ENCODE measurements at regions of chr17 and their contacts with region 1.

Region 1: DNA sequence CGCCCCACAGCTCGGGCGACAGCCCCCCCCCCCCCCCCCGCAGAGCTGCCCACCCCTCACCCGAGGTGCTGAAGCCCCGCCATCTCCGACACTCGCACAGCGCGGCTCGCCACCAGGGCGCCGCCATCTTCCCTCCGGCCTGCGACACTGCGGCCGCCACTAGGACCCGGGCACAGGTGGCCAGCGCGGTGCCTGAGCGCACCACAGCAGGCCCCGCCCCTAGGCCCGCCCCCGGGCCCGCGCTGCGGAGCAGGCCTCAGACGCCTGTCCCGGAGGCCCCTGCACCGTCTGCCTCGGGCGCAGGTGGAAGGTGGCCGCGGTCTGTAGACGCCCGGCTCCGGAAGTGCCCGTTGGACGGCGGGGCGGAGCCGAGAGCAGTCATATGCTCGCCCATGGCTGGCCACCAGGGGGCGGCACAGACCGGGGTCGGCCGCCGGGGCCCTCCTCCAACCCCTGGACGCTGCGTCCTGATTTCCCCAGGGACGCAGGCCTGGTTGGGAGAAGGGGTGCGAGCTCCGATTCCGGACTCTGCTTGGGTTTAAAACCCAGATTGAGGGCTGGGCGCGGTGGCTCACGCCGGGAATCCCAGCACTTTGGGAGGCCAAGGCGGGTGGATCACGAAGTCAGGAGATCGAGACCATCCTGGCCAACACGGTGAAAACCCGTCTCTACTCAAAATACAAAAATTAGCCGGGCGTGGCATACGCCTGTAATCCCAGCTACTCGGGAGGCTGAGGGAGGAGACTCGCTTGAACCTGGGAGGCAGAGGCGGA is at the start of gene MRPL38:
- DNase-seq: peak; percentile 95
- ATAC-seq: peak; percentile 98
- H3K4me3 ChIP-seq: peak within 1 kb of the TSS; percentile 20 to 77
- H3K27ac ChIP-seq: peak within 1 kb of the TSS in 1 of 2 donors; percentile 22
- H3K4me1 ChIP-seq: no peaks in the 10 kb centered on the region
- H3K27me3 ChIP-seq: no peaks in the 10 kb centered on the region
- total RNA-seq, gene MRPL38: 51.3 to 65.4 TPM

Region 2: GRCh38 chr17:76000016-76000754 is 95.2 kb after region 1 on chr17:
- intact Hi-C with region 1: loop called (anchors 2 to 5 kb)
- DNase-seq: no peak
- ATAC-seq: no peak
- H3K4me3 ChIP-seq: no peak overlapping the region
- H3K27ac ChIP-seq: no peak overlapping the region
- H3K4me1 ChIP-seq: no peaks in the 10 kb centered on the region
- H3K27me3 ChIP-seq: no peaks in the 10 kb centered on the region

Region 3: GRCh38 chr17:76005263-76006149 is 100.6 kb after region 1 on chr17:
- intact Hi-C with region 1: loop called (anchors 2 to 5 kb)
- DNase-seq: peak; percentile 82 to 89
- ATAC-seq: no peak
- H3K4me3 ChIP-seq: no peak overlapping the region
- H3K27ac ChIP-seq: no peak overlapping the region
- H3K4me1 ChIP-seq: no peaks in the 10 kb centered on the region
- H3K27me3 ChIP-seq: no peaks in the 10 kb centered on the region

Measured in aorta (tissue), 5 donors.